Natural killer cell (primary cell): ENCODE measurements at regions of chr1 and their contacts with region 1.

Region 1: GRCh38 chr1:25031966-25032667 is 102.0 kb upstream of the RUNX3 start:
- DNase-seq: peak; percentile 45 to 92
- ATAC-seq: peak; percentile 46 to 74 (median 56)
- H3K4me3 ChIP-seq: no peak overlapping the region
- H3K4me3 Mint-ChIP-seq: peak overlapping the region; percentile 26
- H3K27ac ChIP-seq: peak overlapping the region; percentile 87
- H3K27ac Mint-ChIP-seq: no peak overlapping the region
- H3K4me1 ChIP-seq: peaks cover 98% of the 10 kb centered on the region
- H3K4me1 Mint-ChIP-seq: peaks cover 3 to 65% of the 10 kb centered on the region in 2 donors
- H3K27me3 ChIP-seq: no peaks in the 10 kb centered on the region
- H3K27me3 Mint-ChIP-seq: no peaks in the 10 kb centered on the region
- CTCF ChIP-seq: no peak

Region 2: DNA sequence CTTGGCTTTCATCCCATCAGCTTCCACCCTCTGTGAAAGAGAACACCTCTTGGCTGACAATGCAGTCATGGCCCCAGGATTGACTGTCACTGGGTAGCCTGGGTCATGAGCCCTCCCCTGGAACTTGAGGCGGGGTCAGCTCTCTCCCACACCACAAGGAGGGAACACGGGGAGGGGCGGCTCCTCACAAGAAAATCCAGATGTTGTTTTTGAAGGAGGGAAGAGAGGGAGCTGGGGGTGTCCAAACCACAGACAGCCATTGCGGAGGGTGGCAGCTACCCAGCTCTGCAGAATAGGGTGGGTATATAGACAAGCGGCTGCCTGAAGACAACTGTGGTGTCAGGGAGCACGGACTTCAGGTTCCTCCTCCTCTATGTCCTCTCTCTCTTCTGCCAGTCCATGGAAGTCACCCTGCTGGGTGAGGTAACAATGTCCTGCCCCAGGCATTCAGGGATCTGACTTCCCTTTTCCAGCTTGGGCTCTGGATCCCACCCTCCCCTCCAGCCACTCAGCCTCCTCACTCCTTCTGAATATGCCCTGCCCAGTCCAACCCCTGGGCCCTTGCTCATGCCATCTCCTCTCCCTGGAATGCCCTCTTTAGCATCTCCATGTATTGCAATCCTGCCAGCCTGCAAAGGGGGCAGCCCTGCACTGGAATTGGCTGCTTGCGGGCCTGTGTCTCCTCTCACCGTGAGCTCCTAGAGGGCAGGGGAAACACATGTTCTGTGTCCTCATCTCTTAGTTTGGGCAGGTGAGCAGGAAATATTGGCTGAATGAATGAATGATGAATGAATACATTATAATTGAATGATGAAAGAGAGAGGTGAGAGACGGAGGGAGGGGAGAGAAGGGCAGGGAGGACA is 41.1 kb before region 1 on chr1:
- intact Hi-C with region 1: loop called (anchors 5 kb)
- DNase-seq: peak in 1 of 2 donors; percentile 62
- ATAC-seq: no peak
- H3K4me3 ChIP-seq: no peak overlapping the region
- H3K4me3 Mint-ChIP-seq: peak overlapping the region; percentile 47
- H3K27ac ChIP-seq: peak overlapping the region; percentile 71
- H3K27ac Mint-ChIP-seq: peak overlapping the region in 1 of 2 donors; percentile 72
- H3K4me1 ChIP-seq: peaks cover 76% of the 10 kb centered on the region
- H3K4me1 Mint-ChIP-seq: peaks cover 56 to 67% of the 10 kb centered on the region in 2 donors
- H3K27me3 ChIP-seq: no peaks in the 10 kb centered on the region
- H3K27me3 Mint-ChIP-seq: peaks cover 35 to 38% of the 10 kb centered on the region in 2 donors
- CTCF ChIP-seq: no peak